ENCODE measurements at regions of chr17 and their contacts with region 1.

Region 1: DNA sequence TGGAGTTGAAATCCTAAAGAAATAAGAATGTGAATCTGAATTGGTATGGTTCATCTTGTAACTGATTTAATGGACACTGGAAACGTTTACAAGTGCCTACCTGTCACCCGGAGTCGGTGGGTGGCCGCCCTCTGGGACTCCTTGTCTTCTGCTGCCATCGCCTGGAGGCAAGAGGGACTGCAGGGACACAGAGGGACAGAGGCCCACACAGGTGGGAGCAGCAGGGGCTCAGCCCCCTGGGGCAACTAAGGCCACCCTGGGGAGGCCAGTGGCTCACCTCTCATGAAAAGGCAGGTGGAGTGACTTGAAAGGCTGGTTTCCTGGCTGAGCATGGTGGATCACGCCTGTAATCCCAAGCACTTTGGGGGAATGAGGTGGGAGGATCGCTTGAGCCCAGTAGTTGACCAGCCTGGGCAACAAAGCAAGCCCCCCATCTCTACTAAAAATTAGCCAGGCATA is 23.2 kb downstream of the TMEM92 start:
- DNase-seq: peak; percentile 89
- H3K4me3 Mint-ChIP-seq: no peak overlapping the region
- H3K27ac Mint-ChIP-seq: no peak overlapping the region
- H3K4me1 Mint-ChIP-seq: no peaks in the 10 kb centered on the region
- H3K27me3 Mint-ChIP-seq: peaks cover 3% of the 10 kb centered on the region

Region 2: DNA sequence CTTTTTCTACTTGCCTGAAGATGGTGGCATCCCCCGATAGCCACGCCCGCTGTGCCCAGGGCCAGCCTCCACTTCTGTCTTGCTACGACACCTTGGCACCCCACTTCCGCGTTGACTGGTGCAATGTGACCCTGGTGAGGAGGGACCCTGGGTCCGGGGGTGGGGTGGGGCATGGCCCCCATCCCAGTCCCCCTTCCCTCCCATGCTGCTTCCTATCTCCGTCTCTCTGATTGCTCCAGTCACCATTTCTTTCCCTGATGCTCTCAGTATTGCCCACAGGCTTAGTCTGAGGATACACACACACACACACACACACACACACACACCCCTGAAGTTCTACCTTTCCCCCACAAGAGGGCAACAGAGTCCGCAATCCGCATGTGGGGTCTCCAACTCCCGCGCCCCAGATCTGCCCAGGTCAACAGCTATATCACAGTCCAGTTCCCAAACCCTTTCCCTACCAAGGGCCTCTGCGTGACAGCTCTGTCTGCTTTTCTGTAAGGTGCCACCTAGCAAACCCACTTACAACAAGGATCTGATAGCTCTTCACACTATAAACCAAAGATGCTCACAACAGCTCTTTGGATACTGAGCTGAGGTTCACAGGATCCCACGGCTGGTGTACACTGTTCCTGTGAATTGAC is 128.2 kb before region 1 on chr17:
- CTCF ChIA-PET with region 1: interaction called, 44 read pairs
- intact Hi-C with region 1: loop called (anchors 1 kb)
- DNase-seq: peak; percentile 57
- H3K4me3 Mint-ChIP-seq: peak overlapping the region; percentile 46
- H3K27ac Mint-ChIP-seq: no peak overlapping the region
- H3K4me1 Mint-ChIP-seq: peaks cover 10% of the 10 kb centered on the region
- H3K27me3 Mint-ChIP-seq: no peaks in the 10 kb centered on the region

Region 3: GRCh38 chr17:50206604-50207293 is 90.7 kb before region 1 on chr17:
- CTCF ChIA-PET with region 1: interaction called, 151 read pairs
- intact Hi-C with region 1: no loop called
- DNase-seq: no peak
- H3K4me3 Mint-ChIP-seq: no peak overlapping the region
- H3K27ac Mint-ChIP-seq: no peak overlapping the region
- H3K4me1 Mint-ChIP-seq: peaks cover 12% of the 10 kb centered on the region
- H3K27me3 Mint-ChIP-seq: peaks cover 42% of the 10 kb centered on the region

Region 4: DNA sequence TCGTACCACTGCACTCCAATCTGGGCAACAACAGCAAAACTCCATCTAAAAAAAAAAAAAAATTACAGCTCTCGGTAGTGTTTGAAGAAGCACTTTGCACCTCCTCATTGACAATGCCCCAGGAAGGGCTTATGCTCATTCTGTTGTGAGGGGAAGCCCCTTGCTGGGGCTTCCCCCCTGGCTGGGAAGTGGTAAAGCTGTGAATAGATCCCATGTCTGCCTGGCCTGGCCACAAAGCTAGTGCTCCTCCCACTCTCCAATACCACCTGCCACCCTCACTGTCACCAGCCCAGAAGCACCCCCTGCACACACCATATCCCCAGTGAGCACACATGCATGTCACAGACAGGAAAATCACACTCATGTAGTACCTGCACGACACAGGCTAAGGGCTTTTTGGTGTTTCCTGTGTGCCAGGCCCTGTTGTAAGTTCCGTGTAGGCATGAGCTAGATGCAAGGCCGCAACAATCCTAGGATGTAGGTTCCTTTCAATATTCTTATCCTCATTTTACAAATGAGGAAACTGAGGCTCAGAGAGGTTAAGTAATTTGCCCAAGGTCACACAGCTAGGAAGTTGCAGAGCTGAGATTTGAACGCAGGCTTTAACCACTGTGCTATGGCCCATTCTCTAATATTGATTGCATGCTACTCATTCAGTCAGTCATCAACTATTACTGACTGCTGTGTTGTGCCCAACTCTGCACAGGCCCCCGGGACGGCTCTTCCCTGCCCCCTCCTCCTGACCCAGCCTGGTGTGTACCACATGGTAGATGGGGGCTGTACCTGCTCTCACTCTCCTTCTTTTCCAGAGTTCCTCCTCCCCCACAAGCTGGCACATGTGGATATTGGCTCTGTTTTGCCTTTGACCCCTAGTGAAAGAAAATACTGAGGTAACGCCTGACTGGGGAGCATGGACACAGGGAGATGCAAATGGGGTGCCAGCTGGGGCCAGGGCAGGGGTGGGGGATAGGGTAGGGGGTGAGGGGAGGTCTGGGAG is 84.1 kb before region 1 on chr17:
- CTCF ChIA-PET with region 1: interaction called, 13 read pairs
- intact Hi-C with region 1: no loop called
- DNase-seq: peak; percentile 89
- H3K4me3 Mint-ChIP-seq: no peak overlapping the region
- H3K27ac Mint-ChIP-seq: peak overlapping the region; percentile 17
- H3K4me1 Mint-ChIP-seq: peaks cover 29% of the 10 kb centered on the region
- H3K27me3 Mint-ChIP-seq: peaks cover 2% of the 10 kb centered on the region

Region 5: GRCh38 chr17:50269477-50270434 is 27.7 kb before region 1 on chr17:
- CTCF ChIA-PET with region 1: interaction called, 55 read pairs
- intact Hi-C with region 1: loop called (anchors 1 kb)
- DNase-seq: peak; percentile 86
- H3K4me3 Mint-ChIP-seq: no peak overlapping the region
- H3K27ac Mint-ChIP-seq: no peak overlapping the region
- H3K4me1 Mint-ChIP-seq: peaks cover 13% of the 10 kb centered on the region
- H3K27me3 Mint-ChIP-seq: peaks cover 13% of the 10 kb centered on the region

Region 6: GRCh38 chr17:50312308-50312707 is 14.9 kb after region 1 on chr17:
- CTCF ChIA-PET with region 1: interaction called, 13 read pairs
- intact Hi-C with region 1: no loop called
- DNase-seq: no peak
- H3K4me3 Mint-ChIP-seq: no peak overlapping the region
- H3K27ac Mint-ChIP-seq: no peak overlapping the region
- H3K4me1 Mint-ChIP-seq: peaks cover 30% of the 10 kb centered on the region
- H3K27me3 Mint-ChIP-seq: peaks cover 10% of the 10 kb centered on the region

Region 7: GRCh38 chr17:50328363-50329325 is 31.2 kb after region 1 on chr17:
- CTCF ChIA-PET with region 1: no interaction called
- intact Hi-C with region 1: no loop called
- DNase-seq: no peak
- H3K4me3 Mint-ChIP-seq: no peak overlapping the region
- H3K27ac Mint-ChIP-seq: no peak overlapping the region
- H3K4me1 Mint-ChIP-seq: peaks cover 7% of the 10 kb centered on the region
- H3K27me3 Mint-ChIP-seq: no peaks in the 10 kb centered on the region

Region 8: GRCh38 chr17:50371526-50371925 is 74.1 kb after region 1 on chr17:
- CTCF ChIA-PET with region 1: no interaction called
- intact Hi-C with region 1: no loop called
- DNase-seq: no peak
- H3K4me3 Mint-ChIP-seq: peak overlapping the region; percentile 99
- H3K27ac Mint-ChIP-seq: peak overlapping the region; percentile 58
- H3K4me1 Mint-ChIP-seq: peaks cover 30% of the 10 kb centered on the region
- H3K27me3 Mint-ChIP-seq: no peaks in the 10 kb centered on the region